ENCODE measurements at regions of chrX and their contacts with region 1.

Region 1: GRCh38 chrX:2714551-2714950 is 23.5 kb downstream of the CD99 start:
- DNase-seq: no peak
- H3K4me3 ChIP-seq: no peak overlapping the region
- H3K4me3 Mint-ChIP-seq: peak overlapping the region; percentile 50
- H3K27ac Mint-ChIP-seq: peak overlapping the region; percentile 65
- H3K4me1 ChIP-seq: peaks cover 33% of the 10 kb centered on the region
- H3K4me1 Mint-ChIP-seq: peaks cover 30% of the 10 kb centered on the region
- H3K27me3 ChIP-seq: no peaks in the 10 kb centered on the region
- H3K27me3 Mint-ChIP-seq: no peaks in the 10 kb centered on the region
- CTCF ChIP-seq: no peak

Region 2: DNA sequence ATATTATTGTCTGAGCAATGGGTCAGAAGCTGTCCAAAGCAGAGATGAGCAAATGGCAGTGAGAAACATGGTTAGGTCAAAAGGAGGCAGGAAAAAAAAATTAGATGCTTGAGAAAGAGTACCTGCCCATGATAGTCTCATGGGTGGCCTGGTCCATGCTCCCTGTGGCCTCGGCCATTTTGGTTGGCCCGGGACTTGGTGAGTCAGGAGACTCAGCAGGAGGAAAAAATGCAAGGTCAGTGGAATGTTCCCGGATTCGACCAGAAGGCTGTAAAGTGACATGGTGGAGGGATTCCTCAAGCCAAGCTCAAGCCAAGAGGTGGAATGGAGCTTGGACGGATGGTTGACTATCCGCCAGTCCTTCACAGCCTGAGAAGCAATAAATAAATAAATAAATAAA is 863.0 kb before region 1 on chrX:
- CTCF ChIA-PET with region 1: no interaction called
- POLR2A ChIA-PET with region 1: no interaction called
- intact Hi-C with region 1: no loop called
- DNase-seq: no peak
- H3K4me3 ChIP-seq: no peak overlapping the region
- H3K4me3 Mint-ChIP-seq: no peak overlapping the region
- H3K27ac Mint-ChIP-seq: no peak overlapping the region
- H3K4me1 ChIP-seq: no peaks in the 10 kb centered on the region
- H3K4me1 Mint-ChIP-seq: no peaks in the 10 kb centered on the region
- H3K27me3 ChIP-seq: no peaks in the 10 kb centered on the region
- H3K27me3 Mint-ChIP-seq: no peaks in the 10 kb centered on the region
- CTCF ChIP-seq: no peak

Region 3: GRCh38 chrX:2654436-2655340 is 59.9 kb before region 1 on chrX:
- CTCF ChIA-PET with region 1: no interaction called
- POLR2A ChIA-PET with region 1: no interaction called
- intact Hi-C with region 1: loop called (anchors 2 kb)
- DNase-seq: peak; percentile 74 to 77
- H3K4me3 ChIP-seq: peak overlapping the region; percentile 32
- H3K4me3 Mint-ChIP-seq: peak overlapping the region; percentile 76
- H3K27ac Mint-ChIP-seq: peak overlapping the region; percentile 86
- H3K4me1 ChIP-seq: peaks cover 43% of the 10 kb centered on the region
- H3K4me1 Mint-ChIP-seq: peaks cover 7% of the 10 kb centered on the region
- H3K27me3 ChIP-seq: no peaks in the 10 kb centered on the region
- H3K27me3 Mint-ChIP-seq: no peaks in the 10 kb centered on the region
- CTCF ChIP-seq: peak in 1 of 2 experiments; percentile 24

Region 4: GRCh38 chrX:2677764-2678163 is 36.8 kb before region 1 on chrX:
- CTCF ChIA-PET with region 1: no interaction called
- POLR2A ChIA-PET with region 1: no interaction called
- intact Hi-C with region 1: no loop called
- DNase-seq: peak in 1 of 2 experiments; percentile 49
- H3K4me3 ChIP-seq: no peak overlapping the region
- H3K4me3 Mint-ChIP-seq: no peak overlapping the region
- H3K27ac Mint-ChIP-seq: peak overlapping the region; percentile 3
- H3K4me1 ChIP-seq: peaks cover 25% of the 10 kb centered on the region
- H3K4me1 Mint-ChIP-seq: peaks cover 17% of the 10 kb centered on the region
- H3K27me3 ChIP-seq: no peaks in the 10 kb centered on the region
- H3K27me3 Mint-ChIP-seq: no peaks in the 10 kb centered on the region
- CTCF ChIP-seq: no peak

Measured in Caco-2 (cell line).